ENCODE measurements at regions of chr11 and their contacts with region 1.

Region 1: GRCh38 chr11:33161120-33162005 is at the start of gene CSTF3:
- DNase-seq: peak; percentile 100
- ATAC-seq: peak; percentile 99
- H3K4me3 ChIP-seq: peak within 1 kb of the TSS; percentile 75
- H3K27ac ChIP-seq: peak within 1 kb of the TSS; percentile 83
- H3K4me1 ChIP-seq: peaks cover 16% of the 10 kb centered on the region
- H3K27me3 ChIP-seq: no peaks in the 10 kb centered on the region
- CTCF ChIP-seq: peak; percentile 51
- total RNA-seq, gene CSTF3: 17.9 TPM

Region 2: DNA sequence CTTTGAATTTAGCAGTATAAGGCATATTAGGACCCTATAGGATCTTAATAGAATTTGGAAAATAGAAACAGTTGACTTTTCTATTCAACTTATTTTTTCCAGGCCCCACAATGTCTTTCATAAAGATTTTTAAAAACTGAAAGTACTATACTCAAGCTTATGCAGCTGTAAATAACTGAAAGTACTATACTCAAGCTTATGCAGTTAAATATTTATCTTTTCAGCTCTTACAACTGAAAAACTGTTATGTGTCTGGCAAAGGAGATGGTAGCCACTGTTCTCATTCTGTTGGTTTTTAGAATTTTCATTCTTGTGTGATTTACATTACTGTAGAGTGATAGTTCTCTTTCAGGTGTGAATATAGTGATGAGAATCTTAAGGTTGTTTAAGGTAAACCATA is 112.3 kb after region 1 on chr11:
- intact Hi-C with region 1: no loop called
- DNase-seq: no peak
- ATAC-seq: no peak
- H3K4me3 ChIP-seq: no peak overlapping the region
- H3K27ac ChIP-seq: no peak overlapping the region
- H3K4me1 ChIP-seq: peaks cover 40% of the 10 kb centered on the region
- H3K27me3 ChIP-seq: no peaks in the 10 kb centered on the region
- CTCF ChIP-seq: no peak

Region 3: DNA sequence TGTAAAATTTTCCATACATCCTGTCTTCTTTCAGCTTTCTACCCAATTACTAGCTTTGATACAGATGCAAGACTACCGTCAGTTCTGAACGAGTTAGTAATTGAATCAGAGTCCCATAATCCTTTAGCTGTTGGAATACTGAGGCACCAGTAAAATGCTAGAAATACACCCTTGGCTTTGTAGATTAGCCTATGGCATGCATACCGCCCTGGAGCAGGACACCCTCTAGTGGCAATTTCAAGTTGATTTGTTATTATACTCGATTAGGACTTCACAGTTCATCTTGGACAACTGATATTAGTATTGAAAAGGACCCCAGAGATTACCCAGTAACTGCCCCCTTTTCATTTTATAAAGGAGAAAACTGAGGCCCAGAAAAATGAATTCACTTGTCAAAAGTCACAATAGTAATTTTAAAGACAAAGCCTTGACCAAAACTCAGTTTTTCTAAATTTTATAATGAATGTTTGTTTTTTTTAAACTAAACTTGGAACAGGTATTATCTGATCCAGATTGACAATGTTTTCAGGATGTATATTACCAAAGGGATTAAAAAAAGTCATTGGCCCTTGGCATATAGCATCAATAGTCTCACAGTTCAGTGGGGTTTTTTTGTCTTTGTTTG is 168.5 kb after region 1 on chr11:
- intact Hi-C with region 1: loop called (anchors 10 kb)
- DNase-seq: no peak
- ATAC-seq: peak; percentile 91
- H3K4me3 ChIP-seq: no peak overlapping the region
- H3K27ac ChIP-seq: no peak overlapping the region
- H3K4me1 ChIP-seq: peaks cover 22% of the 10 kb centered on the region
- H3K27me3 ChIP-seq: no peaks in the 10 kb centered on the region
- CTCF ChIP-seq: peak; percentile 63

Region 4: DNA sequence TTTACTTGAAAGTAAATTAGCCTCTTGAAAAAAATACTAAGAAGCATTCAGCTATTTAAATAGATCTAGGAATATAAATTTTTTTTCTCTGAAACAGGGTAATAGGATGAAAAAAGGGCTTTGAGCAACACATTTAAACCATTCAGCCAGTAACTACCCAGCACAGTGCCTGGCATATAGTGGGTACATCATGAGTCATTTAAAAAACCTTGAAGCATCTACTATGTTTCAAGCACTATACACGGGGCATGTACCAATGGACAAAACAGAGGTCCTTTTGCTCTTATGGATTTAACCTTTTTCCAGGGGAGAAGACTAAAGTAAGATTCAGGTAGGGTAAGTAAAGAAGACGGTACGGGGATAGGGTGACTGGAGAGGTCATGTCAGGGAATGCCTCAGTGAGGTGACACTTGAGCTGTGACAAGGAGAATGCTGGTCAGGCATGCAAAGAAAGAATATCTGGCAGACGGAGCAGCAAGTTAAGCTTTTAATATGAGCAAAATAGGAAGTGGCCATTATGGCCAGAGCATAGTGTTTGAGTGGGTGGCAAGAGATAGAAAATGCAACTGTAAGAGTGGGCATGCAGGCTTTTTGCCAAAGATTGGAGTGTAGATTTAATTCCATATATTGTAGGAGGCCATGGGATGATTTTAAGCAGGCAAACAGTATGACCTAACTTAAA is 196.9 kb after region 1 on chr11:
- intact Hi-C with region 1: no loop called
- DNase-seq: no peak
- ATAC-seq: peak; percentile 38
- H3K4me3 ChIP-seq: no peak overlapping the region
- H3K27ac ChIP-seq: no peak overlapping the region
- H3K4me1 ChIP-seq: no peaks in the 10 kb centered on the region
- H3K27me3 ChIP-seq: no peaks in the 10 kb centered on the region
- CTCF ChIP-seq: no peak

Measured in upper lobe of right lung (tissue), 1 donor.